Stomach (tissue), 19 donors: ENCODE measurements at regions of chr1 and their contacts with region 1.

Region 1: DNA sequence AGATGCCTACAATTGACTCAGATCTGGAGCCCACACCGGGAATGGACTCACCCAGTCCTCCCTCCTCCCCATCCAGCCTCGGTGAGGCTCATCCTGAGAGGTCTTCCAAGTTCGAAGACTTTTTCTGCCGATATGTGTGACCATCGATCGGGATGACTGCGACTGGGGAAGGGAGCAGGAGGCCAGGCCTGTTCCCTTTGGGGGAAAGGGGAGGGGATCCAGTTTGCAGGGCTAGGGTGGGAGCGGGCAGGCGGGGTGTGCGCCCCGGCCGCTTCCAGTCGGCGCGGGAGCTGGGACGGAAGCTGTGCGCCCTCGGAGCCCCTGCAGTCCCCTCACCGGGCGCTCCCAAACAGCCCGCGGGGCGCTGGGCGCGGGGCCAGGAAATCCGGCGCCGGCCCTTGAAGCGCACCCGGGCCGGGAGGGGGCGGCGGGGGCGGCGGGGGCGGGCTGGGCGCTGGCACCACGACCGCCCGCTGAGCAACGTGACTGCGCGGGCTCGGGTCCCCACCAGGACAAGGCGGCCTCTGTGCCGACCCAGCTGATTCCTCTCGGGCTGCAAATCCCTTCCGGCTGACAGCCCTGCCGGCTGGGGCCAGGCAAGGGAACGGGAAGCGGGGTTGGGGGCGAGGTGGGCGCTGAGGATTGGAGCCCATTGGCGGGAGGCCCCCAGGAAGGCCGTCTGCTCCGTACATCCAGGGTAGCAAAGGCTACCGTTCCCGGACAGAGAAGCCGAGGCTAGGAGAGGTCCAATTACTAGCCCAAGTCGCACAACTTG is 103.9 kb downstream of the EBNA1BP2 start:
- DNase-seq: peak in 1 of 2 donors; percentile 88
- H3K4me3 ChIP-seq: peak overlapping the region; percentile 44 to 52 (median 48)
- H3K27ac ChIP-seq: peak overlapping the region in 2 of 5 donors; percentile 20 to 67
- H3K4me1 ChIP-seq: peaks cover 17 to 30% (median 22%) of the 10 kb centered on the region in 4 donors
- H3K27me3 ChIP-seq: peaks cover 0 to 9% (median 0%) of the 10 kb centered on the region in 3 donors
- CTCF ChIP-seq: no peak
- EP300 ChIP-seq: no peak
- POLR2A ChIP-seq: no peak

Region 2: DNA sequence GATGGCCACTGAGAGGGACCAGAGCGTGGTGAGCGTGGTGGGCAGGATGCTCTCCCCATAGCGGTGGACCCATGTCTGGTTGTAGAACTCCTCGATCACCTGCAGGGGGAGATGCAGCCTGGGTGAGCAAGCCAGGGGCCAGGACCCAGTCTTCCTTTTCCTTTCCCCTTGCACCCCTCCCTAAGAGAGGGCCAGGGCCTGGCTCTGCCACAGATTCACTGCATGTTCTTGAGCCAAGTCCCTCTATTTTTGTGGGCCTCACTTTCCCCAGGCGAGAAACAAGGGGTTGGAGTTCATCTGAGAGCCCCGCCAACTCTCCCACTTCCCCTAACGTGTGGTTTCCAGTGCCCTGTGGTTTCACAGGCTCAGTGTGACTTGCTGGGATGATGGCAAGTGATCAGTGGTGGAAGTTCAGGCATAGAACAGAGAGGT is 137.0 kb before region 1 on chr1:
- intact Hi-C with region 1: loop called (anchors 10 kb)
- DNase-seq: peak in 1 of 2 donors; percentile 70
- H3K4me3 ChIP-seq: no peak overlapping the region
- H3K27ac ChIP-seq: peak overlapping the region; percentile 4 to 91 (median 81)
- H3K4me1 ChIP-seq: peaks cover 28 to 58% (median 49%) of the 10 kb centered on the region in 4 donors
- H3K27me3 ChIP-seq: no peaks in the 10 kb centered on the region
- CTCF ChIP-seq: peak in 5 of 7 experiments; percentile 3 to 52 (median 44)
- EP300 ChIP-seq: no peak
- POLR2A ChIP-seq: no peak

Region 3: DNA sequence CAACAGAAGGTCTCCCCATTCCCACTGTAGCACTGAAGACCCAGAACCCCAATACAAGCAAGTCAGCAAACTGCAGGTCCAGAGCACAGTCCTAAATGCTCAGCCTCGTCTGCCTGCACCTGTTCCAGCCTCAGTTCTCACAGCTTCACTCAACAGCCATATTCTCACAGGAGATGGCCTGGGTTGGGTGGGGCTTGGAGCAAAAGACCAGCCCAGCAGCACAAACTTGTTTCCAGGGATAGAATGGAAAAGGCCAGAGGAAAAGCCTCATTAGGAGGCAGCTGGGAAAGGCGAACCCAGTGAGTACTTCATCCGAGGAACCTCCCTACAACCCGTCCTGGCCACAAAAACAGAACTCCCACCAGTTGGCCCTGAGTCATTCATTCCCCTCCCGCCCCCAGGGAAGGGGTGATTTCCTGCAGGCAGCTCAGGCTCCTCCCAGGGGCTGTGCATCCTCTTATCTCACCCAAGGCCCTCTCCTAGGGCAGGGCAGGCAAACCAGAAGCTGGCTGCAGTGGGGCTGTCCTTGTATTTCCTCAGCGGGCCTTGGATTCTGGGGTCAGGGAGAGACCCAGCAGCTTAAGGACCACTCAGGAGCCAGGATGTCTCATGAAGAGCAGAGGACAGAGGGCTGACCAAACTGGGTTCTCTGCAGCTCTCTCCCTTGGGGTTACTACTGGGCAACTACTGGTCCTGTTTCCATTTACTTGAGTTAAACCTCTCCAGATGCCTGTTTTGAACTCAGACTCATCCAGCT is 262.0 kb after region 1 on chr1:
- intact Hi-C with region 1: no loop called
- DNase-seq: peak in 1 of 2 donors; percentile 77
- H3K4me3 ChIP-seq: no peak overlapping the region
- H3K27ac ChIP-seq: peak overlapping the region in 1 of 5 donors; percentile 7
- H3K4me1 ChIP-seq: peaks cover 0 to 11% (median 3%) of the 10 kb centered on the region in 4 donors
- H3K27me3 ChIP-seq: no peaks in the 10 kb centered on the region
- CTCF ChIP-seq: no peak
- EP300 ChIP-seq: no peak
- POLR2A ChIP-seq: no peak